ENCODE measurements at regions of chr10 and their contacts with region 1.

Region 1: DNA sequence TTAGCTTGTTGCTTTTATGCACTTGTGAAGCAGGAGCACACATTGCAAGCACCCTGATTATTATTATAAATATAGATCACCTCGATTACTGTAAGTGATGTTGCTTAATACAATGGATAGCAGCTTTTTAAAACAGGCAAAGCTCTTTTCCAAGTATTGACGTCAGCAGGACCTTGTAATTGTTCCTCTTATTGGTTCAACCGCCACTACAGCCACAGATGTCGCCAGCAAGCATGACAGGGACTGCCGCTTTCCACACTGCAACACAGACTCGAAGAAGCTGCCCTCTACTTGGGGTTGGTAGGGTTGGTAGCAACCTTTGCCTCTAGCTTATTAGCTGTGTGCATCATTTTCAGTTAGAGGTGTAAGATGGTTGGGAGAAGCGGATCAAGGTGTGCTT is 167.6 kb downstream of the ZNF365 start:
- DNase-seq: no peak
- H3K4me3 ChIP-seq: no peak overlapping the region
- H3K27ac ChIP-seq: no peak overlapping the region
- H3K4me1 ChIP-seq: no peaks in the 10 kb centered on the region
- H3K27me3 ChIP-seq: no peaks in the 10 kb centered on the region
- CTCF ChIP-seq: no peak

Region 2: DNA sequence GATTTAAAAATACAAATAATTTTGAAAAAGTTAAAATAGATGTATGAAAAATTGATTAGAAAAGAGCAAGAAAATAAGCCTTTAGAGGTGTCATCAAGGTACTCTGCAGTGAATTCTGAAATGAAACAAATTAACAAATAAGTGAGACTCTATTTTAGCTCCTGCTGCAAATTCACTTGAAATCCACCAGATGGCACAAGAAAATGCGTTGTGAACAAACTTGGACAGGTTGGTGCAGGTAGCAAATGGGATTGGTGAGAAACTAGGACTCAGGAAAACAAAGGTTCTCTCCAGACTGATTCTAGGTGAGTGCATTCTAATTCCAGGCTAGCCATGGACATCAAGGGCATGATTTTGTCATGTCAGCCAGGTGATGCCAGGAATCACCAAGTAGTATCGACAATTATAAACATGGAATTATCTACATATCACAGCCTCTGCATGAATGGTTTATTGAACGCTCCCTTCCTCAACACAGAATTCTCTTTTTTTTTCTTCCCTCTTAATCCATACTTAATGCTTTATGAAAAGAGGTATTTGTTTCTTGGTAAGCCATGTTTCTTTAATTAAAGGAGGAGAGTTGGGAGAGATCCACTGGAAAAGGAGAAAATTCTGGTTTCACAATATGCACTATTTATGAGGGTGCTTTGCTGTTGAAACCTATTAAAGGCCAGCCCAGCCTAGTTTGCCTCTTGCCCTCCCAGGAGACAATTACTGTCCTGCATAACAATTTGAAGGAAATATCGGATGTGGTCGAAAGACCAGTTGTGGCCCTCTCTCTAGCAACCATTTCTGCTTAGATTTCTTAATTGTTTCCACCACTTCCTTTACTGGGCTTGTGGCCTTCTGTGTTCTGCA is 49.6 kb before region 1 on chr10:
- CTCF ChIA-PET with region 1: no interaction called
- POLR2A ChIA-PET with region 1: no interaction called
- intact Hi-C with region 1: loop called (anchors 1 kb)
- DNase-seq: peak in 1 of 2 experiments; percentile 42
- H3K4me3 ChIP-seq: no peak overlapping the region
- H3K27ac ChIP-seq: no peak overlapping the region
- H3K4me1 ChIP-seq: no peaks in the 10 kb centered on the region; the same call in 1 of the 2 replicates
- H3K27me3 ChIP-seq: no peaks in the 10 kb centered on the region
- CTCF ChIP-seq: peak; percentile 70

Region 3: GRCh38 chr10:62577666-62578291 is 36.0 kb after region 1 on chr10:
- CTCF ChIA-PET with region 1: no interaction called
- POLR2A ChIA-PET with region 1: no interaction called
- intact Hi-C with region 1: no loop called
- DNase-seq: no peak
- H3K4me3 ChIP-seq: no peak overlapping the region
- H3K27ac ChIP-seq: no peak overlapping the region
- H3K4me1 ChIP-seq: no peaks in the 10 kb centered on the region
- H3K27me3 ChIP-seq: peaks cover 2% of the 10 kb centered on the region; the same call in 1 of the 2 replicates
- CTCF ChIP-seq: no peak

Measured in PC-9 (cell line).